ENCODE measurements at regions of chr1 and their contacts with region 1.

Region 1: DNA sequence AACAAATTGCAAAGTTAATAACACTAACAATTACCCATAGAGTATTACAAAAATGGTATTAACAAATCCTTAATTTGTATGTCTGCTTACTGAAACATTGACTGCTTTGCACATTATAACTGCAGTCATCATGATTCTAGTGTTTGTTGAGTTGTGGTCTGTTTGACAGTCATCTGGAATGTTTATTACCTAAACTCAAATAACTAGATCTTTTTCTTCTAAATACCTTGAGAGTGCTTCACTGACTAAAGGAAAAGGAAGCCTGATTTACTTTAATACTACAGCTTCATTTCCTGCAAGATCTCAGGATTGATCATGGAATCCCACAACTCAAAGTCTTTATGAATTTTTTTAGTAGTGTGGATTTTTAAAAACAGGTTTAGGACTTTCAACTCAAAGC is 70.0 kb downstream of the HMCN1 start:
- DNase-seq: no peak
- H3K4me3 ChIP-seq: no peak overlapping the region
- CTCF ChIP-seq: no peak

Region 2: GRCh38 chr1:185720633-185721272 is 83.5 kb before region 1 on chr1:
- in situ Hi-C with region 1: loop called (anchors 5 kb)
- DNase-seq: peak; percentile 64
- H3K4me3 ChIP-seq: no peak overlapping the region
- CTCF ChIP-seq: peak; percentile 36

Region 3: DNA sequence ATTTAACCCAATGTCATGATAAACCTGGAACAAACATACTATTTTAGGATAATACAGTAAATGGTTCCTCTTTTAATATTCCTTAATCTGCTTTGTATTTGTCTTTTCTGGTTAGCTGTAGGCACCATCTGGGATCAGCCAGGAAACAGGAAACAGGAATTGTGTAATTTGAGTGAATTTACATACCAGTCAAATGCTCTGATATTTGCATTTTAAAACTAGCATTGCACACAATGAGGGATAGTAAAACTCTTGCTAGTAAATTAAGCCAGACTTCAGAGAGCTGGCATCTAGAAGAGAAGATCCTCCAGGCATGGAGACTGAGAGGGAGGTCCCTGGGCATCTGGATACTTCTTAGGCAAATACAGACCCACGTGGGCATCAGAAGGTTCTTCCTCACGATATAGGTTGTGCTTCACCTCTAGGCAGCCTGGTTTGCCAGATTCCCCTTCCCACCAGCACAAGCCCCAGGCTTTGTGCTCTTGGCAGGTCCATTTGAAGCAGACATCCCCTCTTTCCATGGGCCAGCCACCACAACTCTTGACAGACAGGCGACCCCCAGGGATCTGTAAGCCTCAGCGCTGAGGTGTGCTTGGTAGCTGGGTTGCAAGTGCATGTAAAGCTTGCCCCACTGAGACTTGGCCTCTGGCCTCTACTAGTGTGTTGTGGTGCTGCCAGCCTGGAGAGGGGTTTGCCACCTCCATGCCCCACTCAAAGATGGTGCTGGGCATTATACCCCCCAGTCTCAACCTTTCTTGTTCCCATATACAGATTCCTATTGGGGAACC is 33.7 kb after region 1 on chr1:
- in situ Hi-C with region 1: no loop called
- DNase-seq: no peak
- H3K4me3 ChIP-seq: no peak overlapping the region
- CTCF ChIP-seq: no peak

Measured in astrocyte of the cerebellum (primary cell).